ENCODE measurements at regions of chr11 and their contacts with region 1.

Region 1: DNA sequence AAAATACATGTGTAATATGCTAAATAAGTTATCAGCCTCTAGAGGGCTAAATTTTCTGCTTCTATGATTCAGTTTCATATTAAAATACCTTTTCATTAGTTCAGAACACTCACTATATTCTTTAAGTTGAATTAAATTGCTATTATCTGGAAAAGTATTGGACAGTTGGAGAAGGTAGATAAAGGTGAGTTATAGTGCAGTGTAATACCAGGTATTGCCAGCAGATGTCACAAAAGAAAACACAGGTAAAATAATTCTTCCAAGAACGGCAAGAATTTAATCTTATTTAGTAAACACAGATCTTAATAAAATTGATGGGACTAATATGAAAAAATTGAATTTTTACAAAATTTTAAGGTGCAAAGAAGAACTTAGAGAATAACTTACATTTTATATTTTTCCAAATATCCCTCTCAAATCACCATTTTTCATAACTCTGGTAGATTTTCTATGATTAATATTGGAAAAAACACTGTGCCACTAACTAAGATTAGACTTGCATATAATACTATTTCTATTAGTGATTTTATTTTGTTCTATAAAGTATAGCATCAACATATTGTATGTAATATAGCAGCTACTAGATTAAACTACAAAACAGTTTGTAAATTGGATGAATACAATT is 1.7 kb upstream of the LRRC4C start:
- DNase-seq: peak; percentile 11 to 40 (median 13)
- H3K4me3 ChIP-seq: no peak overlapping the region
- H3K27ac ChIP-seq: no peak overlapping the region
- H3K4me1 ChIP-seq: no peaks in the 10 kb centered on the region
- H3K27me3 ChIP-seq: peaks cover 8 to 29% (median 15%) of the 10 kb centered on the region in 5 experiments

Region 2: GRCh38 chr11:41494716-41495115 is 33.5 kb after region 1 on chr11:
- CTCF ChIA-PET with region 1: no interaction called
- POLR2A ChIA-PET with region 1: no interaction called
- DNase-seq: no peak
- H3K4me3 ChIP-seq: no peak overlapping the region
- H3K27ac ChIP-seq: no peak overlapping the region
- H3K4me1 ChIP-seq: no peaks in the 10 kb centered on the region
- H3K27me3 ChIP-seq: peaks cover 0 to 2% (median 0%) of the 10 kb centered on the region in 5 experiments

Region 3: GRCh38 chr11:42524534-42525227 is 1063.5 kb after region 1 on chr11:
- CTCF ChIA-PET with region 1: interaction called, 41 read pairs
- POLR2A ChIA-PET with region 1: no interaction called
- DNase-seq: peak; percentile 43 to 81 (median 71)
- H3K4me3 ChIP-seq: no peak overlapping the region
- H3K27ac ChIP-seq: no peak overlapping the region
- H3K4me1 ChIP-seq: no peaks in the 10 kb centered on the region
- H3K27me3 ChIP-seq: peaks cover 0 to 1% (median 0%) of the 10 kb centered on the region in 5 experiments

Measured in common myeloid progenitor, CD34-positive (primary cell).